Endothelial cell of umbilical vein (primary cell): ENCODE measurements at regions of chr20 and their contacts with region 1.

Region 1: DNA sequence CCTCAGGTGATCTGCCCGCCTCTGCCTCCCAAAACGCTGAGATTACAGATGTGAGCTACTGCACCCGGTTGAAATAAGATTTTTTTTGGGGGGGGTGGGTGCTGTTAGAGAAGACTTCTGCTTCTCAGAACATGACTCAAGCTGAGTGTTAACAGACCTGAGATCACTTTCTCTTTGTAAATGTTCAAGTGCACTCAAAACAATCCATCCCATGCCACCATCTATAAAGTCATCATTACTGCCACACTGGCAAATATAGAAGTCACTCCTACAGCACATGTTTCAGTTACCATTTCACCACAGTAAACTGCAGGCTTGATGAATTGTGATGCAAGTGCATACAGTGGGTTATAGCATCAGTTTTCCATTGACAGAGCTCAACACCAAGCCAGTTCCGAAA is 9.0 kb downstream of the VPS16 start:
- DNase-seq: no peak
- H3K4me3 ChIP-seq: no peak overlapping the region
- H3K27ac ChIP-seq: no peak overlapping the region
- H3K4me1 ChIP-seq: no peaks in the 10 kb centered on the region
- H3K27me3 ChIP-seq: no peaks in the 10 kb centered on the region
- CTCF ChIP-seq: no peak
- POLR2A ChIP-seq: no peak

Region 2: DNA sequence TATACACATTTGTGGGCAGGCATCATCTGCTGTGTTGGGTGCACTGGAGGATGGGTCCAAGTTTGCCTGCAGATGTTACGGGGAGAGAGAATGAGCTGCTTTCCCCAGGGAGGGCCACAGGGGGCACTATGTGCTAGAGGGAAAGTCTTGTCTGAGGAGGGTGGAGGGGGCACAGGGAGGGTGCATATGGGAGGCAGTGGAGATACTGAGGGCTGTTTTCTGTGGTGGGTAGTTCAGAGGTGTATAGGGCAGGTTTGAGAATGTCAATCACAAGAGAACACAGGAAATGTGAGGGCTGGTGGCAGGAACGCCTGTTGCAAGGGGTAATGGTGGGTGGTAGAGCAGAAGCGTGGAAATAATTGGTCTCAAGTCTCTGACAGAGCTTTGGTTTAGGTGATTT is 16.1 kb after region 1 on chr20:
- CTCF ChIA-PET with region 1: interaction called, 14 read pairs
- POLR2A ChIA-PET with region 1: no interaction called
- dilution Hi-C with region 1: no loop called
- intact Hi-C with region 1: no loop called
- DNase-seq: no peak
- H3K4me3 ChIP-seq: no peak overlapping the region
- H3K27ac ChIP-seq: no peak overlapping the region
- H3K4me1 ChIP-seq: peaks cover 5% of the 10 kb centered on the region
- H3K27me3 ChIP-seq: no peaks in the 10 kb centered on the region
- CTCF ChIP-seq: peak in 1 of 2 donors; percentile 16
- POLR2A ChIP-seq: no peak

Region 3: DNA sequence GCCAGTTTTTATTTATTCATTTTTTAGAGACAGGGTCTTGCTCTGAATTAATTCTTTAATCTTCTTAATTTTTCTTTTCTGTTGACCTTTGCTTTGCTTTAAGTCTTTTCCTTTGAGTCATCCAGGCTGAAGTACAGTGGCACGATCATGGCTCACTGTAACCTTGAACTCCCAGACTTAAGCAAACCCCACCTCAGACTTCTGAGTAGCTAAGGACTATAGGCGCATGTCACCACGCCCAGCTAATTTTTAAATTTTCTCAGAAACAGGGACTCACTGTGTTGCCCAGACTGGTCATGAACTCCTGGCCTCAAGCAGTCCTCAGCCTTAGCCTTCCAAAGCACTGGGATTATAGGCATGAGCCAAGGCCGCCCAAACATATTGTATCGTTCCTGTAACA is 122.6 kb after region 1 on chr20:
- CTCF ChIA-PET with region 1: no interaction called
- POLR2A ChIA-PET with region 1: no interaction called
- dilution Hi-C with region 1: no loop called
- intact Hi-C with region 1: no loop called
- DNase-seq: no peak
- H3K4me3 ChIP-seq: no peak overlapping the region
- H3K27ac ChIP-seq: no peak overlapping the region
- H3K4me1 ChIP-seq: no peaks in the 10 kb centered on the region
- H3K27me3 ChIP-seq: no peaks in the 10 kb centered on the region
- CTCF ChIP-seq: no peak
- POLR2A ChIP-seq: no peak

Region 4: GRCh38 chr20:3000852-3001523 is 151.5 kb after region 1 on chr20:
- CTCF ChIA-PET with region 1: interaction called, 4 read pairs
- POLR2A ChIA-PET with region 1: no interaction called
- dilution Hi-C with region 1: no loop called
- intact Hi-C with region 1: loop called (anchors 1 kb)
- DNase-seq: peak; percentile 80
- H3K4me3 ChIP-seq: no peak overlapping the region
- H3K27ac ChIP-seq: no peak overlapping the region
- H3K4me1 ChIP-seq: no peaks in the 10 kb centered on the region
- H3K27me3 ChIP-seq: no peaks in the 10 kb centered on the region
- CTCF ChIP-seq: peak; percentile 15 to 43
- POLR2A ChIP-seq: no peak